Activated CD8-positive, alpha-beta T cell treated with anti-CD3 and anti-CD28 coated beads, Interleukin-2, amount 10 ng/mL, durations not matched to agents 7 days and 5 days (primary cell): ENCODE measurements at regions of chr15 and their contacts with region 1.

Region 1: DNA sequence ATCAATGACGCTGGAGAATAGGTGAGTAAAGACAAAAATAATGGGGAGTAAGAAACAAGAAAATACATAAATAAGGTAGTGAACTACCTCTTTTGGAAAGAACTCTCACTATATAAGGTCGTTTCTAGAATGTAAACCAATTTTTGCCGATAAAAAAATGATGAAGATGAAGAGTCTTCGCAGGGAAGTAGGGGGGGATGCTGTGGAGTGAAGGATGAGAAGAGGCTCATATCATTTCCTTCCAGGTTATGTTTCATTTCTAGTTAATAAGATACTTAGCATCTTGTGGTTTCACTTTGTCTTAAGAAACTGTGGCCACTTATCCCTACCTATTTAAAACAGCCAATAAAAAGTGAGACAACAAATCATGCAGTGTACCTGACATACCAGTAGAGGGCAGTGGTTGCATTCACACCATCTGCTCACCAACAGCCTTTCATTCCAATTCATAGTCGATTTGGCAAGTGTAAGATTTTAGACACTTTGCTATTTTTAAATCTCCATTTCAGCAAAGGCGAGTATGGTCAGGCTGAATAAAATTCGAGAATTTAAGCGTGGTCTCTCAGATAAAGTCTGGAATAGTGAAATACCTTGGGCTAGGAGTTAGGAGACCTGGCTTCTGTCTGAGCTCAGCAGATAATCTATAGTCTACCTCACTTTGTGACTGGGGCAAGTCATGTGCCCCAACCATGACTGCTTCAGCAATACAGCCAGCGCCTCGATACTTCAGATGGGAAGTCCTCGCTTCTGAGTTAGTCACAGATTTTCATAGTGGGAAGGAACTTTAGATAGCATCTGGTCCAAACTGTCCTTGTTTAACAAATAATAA is 28.9 kb upstream of the ICE2 start:
- DNase-seq: peak; percentile 75
- ATAC-seq: peak; percentile 80
- H3K4me3 Mint-ChIP-seq: peak overlapping the region; percentile 19
- H3K27ac Mint-ChIP-seq: peak overlapping the region; percentile 84
- H3K4me1 Mint-ChIP-seq: peaks cover 42% of the 10 kb centered on the region
- H3K27me3 Mint-ChIP-seq: no peaks in the 10 kb centered on the region

Region 2: DNA sequence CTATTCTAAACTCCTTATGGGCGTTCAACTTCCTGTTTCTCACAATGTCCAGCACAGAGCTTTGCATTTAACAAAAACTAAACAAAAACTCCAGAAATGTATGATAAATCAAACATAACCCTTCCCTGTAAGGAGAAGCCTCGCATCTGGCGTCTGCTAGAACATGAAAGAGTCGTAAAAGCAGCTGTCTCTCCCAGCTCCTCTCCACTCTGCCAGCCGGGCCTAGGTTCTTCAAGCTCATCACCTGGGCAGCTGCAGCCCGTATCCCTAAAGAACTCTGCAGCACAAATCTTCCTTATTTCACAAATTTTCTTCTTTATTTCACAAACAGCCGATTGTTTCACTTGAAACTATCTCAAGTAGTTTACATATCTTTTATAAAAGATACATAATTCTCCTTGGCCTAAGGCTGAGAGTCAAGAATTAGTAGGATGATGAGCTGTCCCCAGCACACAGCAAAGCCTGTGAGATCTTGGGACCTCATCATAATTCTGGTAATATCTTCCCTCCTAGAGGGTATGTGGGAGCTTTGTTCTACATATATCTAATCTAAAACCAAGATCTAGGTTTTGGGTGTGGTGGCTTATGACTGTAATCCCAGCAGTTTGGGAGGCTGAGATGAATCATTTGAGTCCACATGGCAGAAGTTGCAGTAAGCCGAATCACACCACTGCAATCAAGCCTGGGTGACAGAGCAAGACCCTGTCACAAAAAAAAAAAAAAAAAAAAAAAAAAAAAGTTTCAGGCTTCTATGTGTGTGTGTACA is 145.3 kb before region 1 on chr15:
- CTCF ChIA-PET with region 1: interaction called, 64 read pairs
- POLR2A ChIA-PET with region 1: no interaction called
- DNase-seq: peak; percentile 41
- ATAC-seq: peak; percentile 80
- H3K4me3 Mint-ChIP-seq: no peak overlapping the region
- H3K27ac Mint-ChIP-seq: peak overlapping the region; percentile 35
- H3K4me1 Mint-ChIP-seq: peaks cover 26% of the 10 kb centered on the region
- H3K27me3 Mint-ChIP-seq: no peaks in the 10 kb centered on the region

Region 3: GRCh38 chr15:60535743-60536142 is 27.9 kb after region 1 on chr15:
- CTCF ChIA-PET with region 1: interaction called, 12 read pairs
- POLR2A ChIA-PET with region 1: no interaction called
- DNase-seq: no peak
- ATAC-seq: no peak
- H3K4me3 Mint-ChIP-seq: no peak overlapping the region
- H3K27ac Mint-ChIP-seq: no peak overlapping the region
- H3K4me1 Mint-ChIP-seq: peaks cover 41% of the 10 kb centered on the region
- H3K27me3 Mint-ChIP-seq: no peaks in the 10 kb centered on the region

Region 4: DNA sequence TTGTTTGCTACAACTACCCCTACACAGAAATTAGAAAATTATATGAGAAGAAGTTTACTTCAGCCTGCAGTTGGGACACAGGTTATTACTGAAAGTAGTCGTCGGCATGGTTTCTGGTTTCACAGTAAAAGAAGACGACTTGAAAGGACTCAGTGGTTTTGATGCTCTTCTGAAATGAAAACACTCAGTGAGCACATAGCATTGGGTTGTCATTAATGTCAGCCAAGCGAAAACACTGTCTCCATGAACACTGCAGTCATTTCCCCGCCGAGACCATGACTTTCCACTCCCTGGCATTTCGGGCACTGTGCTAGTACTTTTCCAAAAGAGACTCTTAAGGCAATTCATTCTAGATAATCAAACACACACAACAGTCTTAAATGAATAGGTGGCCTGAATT is 40.3 kb after region 1 on chr15:
- CTCF ChIA-PET with region 1: interaction called, 47 read pairs
- POLR2A ChIA-PET with region 1: no interaction called
- DNase-seq: peak; percentile 60
- ATAC-seq: peak; percentile 80
- H3K4me3 Mint-ChIP-seq: peak overlapping the region; percentile 60
- H3K27ac Mint-ChIP-seq: peak overlapping the region; percentile 90
- H3K4me1 Mint-ChIP-seq: peaks cover 94% of the 10 kb centered on the region
- H3K27me3 Mint-ChIP-seq: no peaks in the 10 kb centered on the region

Region 5: GRCh38 chr15:60932051-60932915 is 424.5 kb after region 1 on chr15:
- CTCF ChIA-PET with region 1: interaction called, 16 read pairs
- POLR2A ChIA-PET with region 1: no interaction called
- DNase-seq: peak; percentile 34
- ATAC-seq: peak; percentile 49
- H3K4me3 Mint-ChIP-seq: no peak overlapping the region
- H3K27ac Mint-ChIP-seq: no peak overlapping the region
- H3K4me1 Mint-ChIP-seq: peaks cover 9% of the 10 kb centered on the region
- H3K27me3 Mint-ChIP-seq: peaks cover 30% of the 10 kb centered on the region